Gastrocnemius medialis (tissue), 4 donors: ENCODE measurements at regions of chr2 and their contacts with region 1.

Region 1: GRCh38 chr2:9205963-9206948 is at the start of gene ASAP2:
- DNase-seq: peak in 1 of 2 donors; percentile 33
- ATAC-seq: peak; percentile 79 to 80
- H3K4me3 ChIP-seq: peak within 1 kb of the TSS; percentile 55 to 71 (median 67)
- H3K27ac ChIP-seq: peak within 1 kb of the TSS; percentile 62 to 81 (median 74)
- H3K4me1 ChIP-seq: peaks cover 0 to 25% of the 10 kb centered on the region in 2 donors
- H3K27me3 ChIP-seq: peaks cover 0 to 8% (median 3%) of the 10 kb centered on the region in 3 donors
- CTCF ChIP-seq: peak; percentile 66 to 82 (median 80)
- POLR2A ChIP-seq: peak; percentile 29 to 34
- total RNA-seq, gene ASAP2: 1.9 to 4.0 (median 3.4) TPM

Region 2: GRCh38 chr2:9003616-9004337 is 202.5 kb before region 1 on chr2 and contains the start of gene MBOAT2:
- in situ Hi-C with region 1: no loop called
- intact Hi-C with region 1: loop called (anchors 10 kb)
- DNase-seq: peak; percentile 59 to 70
- ATAC-seq: peak; percentile 93 to 96
- H3K4me3 ChIP-seq: peak within 1 kb of the TSS; percentile 65 to 73 (median 70)
- H3K27ac ChIP-seq: peak within 1 kb of the TSS; percentile 60 to 68 (median 68)
- H3K4me1 ChIP-seq: peaks cover 0 to 6% of the 10 kb centered on the region in 2 donors
- H3K27me3 ChIP-seq: peaks cover 0 to 4% (median 0%) of the 10 kb centered on the region in 3 donors
- CTCF ChIP-seq: no peak
- POLR2A ChIP-seq: peak; percentile 47 to 61
- total RNA-seq, gene MBOAT2: 0.83 to 5.8 (median 3.9) TPM

Region 3: DNA sequence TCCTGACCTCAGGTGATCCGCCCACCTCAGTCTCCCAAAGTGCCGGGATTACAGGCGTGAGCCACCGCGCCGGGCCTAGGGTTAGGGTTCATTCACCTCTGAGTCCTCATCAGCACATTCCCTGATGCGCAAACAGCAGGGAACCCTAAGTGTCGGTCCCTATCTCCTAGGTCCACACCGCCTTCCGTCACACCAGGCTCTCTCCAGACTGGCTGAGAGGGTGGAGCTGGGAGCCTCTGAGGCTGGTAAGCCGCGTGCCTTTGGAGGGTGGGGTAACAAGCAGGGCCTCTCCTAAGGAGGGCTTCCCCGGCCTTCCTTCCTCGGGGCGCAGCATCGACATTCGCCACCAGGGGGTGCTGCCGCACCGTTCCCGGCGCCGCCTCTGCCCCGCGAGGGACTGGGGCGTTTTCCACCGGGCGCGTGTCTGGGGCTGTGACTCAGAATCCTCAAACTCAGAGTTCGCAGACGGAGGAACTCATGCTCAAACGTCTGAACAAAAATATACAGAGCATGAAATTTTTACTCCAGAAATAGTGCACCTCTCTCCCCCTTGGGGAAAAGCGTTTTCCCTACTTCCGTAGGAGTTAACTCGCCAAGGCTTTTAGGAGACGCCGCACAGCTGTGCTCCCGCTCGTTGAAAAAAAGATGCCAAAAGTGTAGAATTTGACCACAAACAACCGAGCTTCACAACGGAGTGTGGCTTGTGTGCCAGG is 63.5 kb before region 1 on chr2:
- in situ Hi-C with region 1: no loop called
- intact Hi-C with region 1: loop called (anchors 2 kb)
- DNase-seq: peak; percentile 68 to 69
- ATAC-seq: peak; percentile 91
- H3K4me3 ChIP-seq: peak overlapping the region; percentile 21 to 43 (median 32)
- H3K27ac ChIP-seq: peak overlapping the region; percentile 27 to 56 (median 38)
- H3K4me1 ChIP-seq: peaks cover 0 to 6% of the 10 kb centered on the region in 2 donors
- H3K27me3 ChIP-seq: no peaks in the 10 kb centered on the region
- CTCF ChIP-seq: peak; percentile 97 to 99 (median 97)
- POLR2A ChIP-seq: no peak

Region 4: GRCh38 chr2:9256570-9257043 is 50.4 kb after region 1 on chr2:
- in situ Hi-C with region 1: no loop called
- intact Hi-C with region 1: loop called (anchors 5 kb)
- DNase-seq: no peak
- ATAC-seq: no peak
- H3K4me3 ChIP-seq: no peak overlapping the region
- H3K27ac ChIP-seq: peak overlapping the region in 3 of 4 donors; percentile 27 to 83 (median 31)
- H3K4me1 ChIP-seq: peaks cover 25 to 37% of the 10 kb centered on the region in 2 donors
- H3K27me3 ChIP-seq: no peaks in the 10 kb centered on the region
- CTCF ChIP-seq: no peak
- POLR2A ChIP-seq: no peak

Region 5: GRCh38 chr2:9310377-9310776 is 104.1 kb after region 1 on chr2:
- in situ Hi-C with region 1: no loop called
- intact Hi-C with region 1: loop called (anchors 2 kb)
- DNase-seq: peak; percentile 43 to 76
- ATAC-seq: peak; percentile 89 to 90
- H3K4me3 ChIP-seq: no peak overlapping the region
- H3K27ac ChIP-seq: peak overlapping the region; percentile 79 to 83 (median 82)
- H3K4me1 ChIP-seq: peaks cover 32 to 35% of the 10 kb centered on the region in 2 donors
- H3K27me3 ChIP-seq: no peaks in the 10 kb centered on the region
- CTCF ChIP-seq: no peak
- POLR2A ChIP-seq: peak in 1 of 2 donors; percentile 16

Region 6: DNA sequence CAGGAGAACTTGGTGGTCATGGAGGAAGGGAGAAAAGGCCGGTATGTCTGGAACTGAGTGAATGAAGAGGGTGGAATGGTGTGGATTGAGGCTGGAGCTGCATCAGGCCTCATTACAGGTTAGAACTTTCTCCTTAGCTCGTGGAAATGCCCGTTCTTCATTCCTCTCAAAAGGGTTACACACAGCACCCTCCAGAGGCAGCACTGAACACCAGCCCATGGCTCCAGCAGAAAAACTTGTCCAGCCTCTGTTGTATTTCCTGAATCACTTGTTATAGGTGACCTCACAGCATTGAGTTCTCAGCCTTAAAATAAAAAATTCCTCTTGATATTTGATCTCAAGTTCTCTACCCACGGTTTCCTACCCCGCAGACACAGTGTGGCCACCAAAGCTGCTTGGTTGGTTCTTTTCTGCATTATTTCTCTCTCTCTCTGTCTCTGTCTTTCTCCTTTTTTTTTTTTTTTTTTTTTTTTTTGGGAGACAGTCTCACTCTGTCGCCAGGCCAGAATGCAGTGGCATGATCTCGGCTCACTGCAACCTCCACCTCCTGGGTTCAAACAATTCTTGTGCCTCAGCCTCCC is 127.4 kb after region 1 on chr2:
- in situ Hi-C with region 1: loop called in 2 of 4 experiments (anchors 10 kb)
- intact Hi-C with region 1: loop called (anchors 1 kb)
- DNase-seq: peak; percentile 24 to 45
- ATAC-seq: peak; percentile 86 to 91
- H3K4me3 ChIP-seq: no peak overlapping the region
- H3K27ac ChIP-seq: peak overlapping the region in 2 of 4 donors; percentile 11 to 24
- H3K4me1 ChIP-seq: peaks cover 7 to 16% of the 10 kb centered on the region in 2 donors
- H3K27me3 ChIP-seq: no peaks in the 10 kb centered on the region
- CTCF ChIP-seq: peak; percentile 36 to 66 (median 45)
- POLR2A ChIP-seq: no peak

Region 7: DNA sequence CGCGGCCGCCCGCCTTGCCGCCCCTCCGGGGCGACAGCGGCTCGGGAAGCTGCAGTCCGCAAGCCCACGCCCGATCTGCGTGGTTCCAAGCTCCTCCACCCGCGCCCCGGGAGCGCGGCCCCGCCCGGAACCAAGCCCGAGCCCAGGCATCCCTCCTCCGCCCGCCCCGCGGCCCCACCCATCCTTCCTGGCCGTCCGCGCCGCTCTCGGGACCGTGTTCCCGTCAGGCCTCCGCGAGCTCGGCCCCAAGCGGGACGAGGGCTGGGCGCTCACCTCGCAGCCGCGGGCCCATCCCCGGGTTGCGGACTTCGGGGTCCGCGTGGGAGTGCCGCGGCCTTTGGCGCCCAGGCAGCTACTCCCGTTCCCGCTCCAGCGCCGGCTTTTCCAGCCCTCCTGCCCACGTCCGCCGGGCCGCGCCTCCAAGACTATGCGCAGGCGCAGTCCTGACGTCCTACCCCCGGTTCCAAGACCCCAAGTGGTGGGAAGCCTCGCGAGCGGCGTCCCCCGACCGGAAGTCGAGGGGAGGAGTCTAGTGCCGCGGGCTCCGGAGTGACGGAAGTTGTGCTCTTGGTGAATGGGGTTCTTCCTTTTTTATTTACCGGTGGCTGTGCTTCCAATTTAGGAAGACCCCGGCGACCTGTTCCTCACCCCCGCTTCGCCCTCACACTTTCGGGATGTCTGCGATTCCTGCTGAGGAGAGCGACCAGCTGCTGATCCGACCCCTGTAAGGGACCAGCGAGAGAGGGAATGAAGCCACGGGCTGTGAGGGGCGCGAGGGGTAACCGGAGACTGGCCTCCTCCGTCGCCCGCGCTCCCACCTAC is 217.1 kb after region 1 on chr2 and contains the starts of genes CPSF3 and ITGB1BP1:
- in situ Hi-C with region 1: no loop called
- intact Hi-C with region 1: loop called (anchors 5 kb)
- DNase-seq: peak; percentile 94 to 96
- ATAC-seq: peak; percentile 93 to 96
- H3K4me3 ChIP-seq: peak within 1 kb of the TSS; percentile 84 to 99 (median 98)
- H3K27ac ChIP-seq: peak within 1 kb of the TSS; percentile 82 to 96 (median 91)
- H3K4me1 ChIP-seq: peaks cover 27 to 29% of the 10 kb centered on the region in 2 donors
- H3K27me3 ChIP-seq: no peaks in the 10 kb centered on the region
- CTCF ChIP-seq: peak in 3 of 5 experiments; percentile 11 to 35 (median 27)
- POLR2A ChIP-seq: peak; percentile 55 to 60
- total RNA-seq, gene CPSF3: 20.9 to 51.8 (median 24.1) TPM
- total RNA-seq, gene ITGB1BP1: 21.4 to 28.0 (median 26.4) TPM